Spleen (tissue), 13 donors: ENCODE measurements at regions of chr3 and their contacts with region 1.

Region 1: DNA sequence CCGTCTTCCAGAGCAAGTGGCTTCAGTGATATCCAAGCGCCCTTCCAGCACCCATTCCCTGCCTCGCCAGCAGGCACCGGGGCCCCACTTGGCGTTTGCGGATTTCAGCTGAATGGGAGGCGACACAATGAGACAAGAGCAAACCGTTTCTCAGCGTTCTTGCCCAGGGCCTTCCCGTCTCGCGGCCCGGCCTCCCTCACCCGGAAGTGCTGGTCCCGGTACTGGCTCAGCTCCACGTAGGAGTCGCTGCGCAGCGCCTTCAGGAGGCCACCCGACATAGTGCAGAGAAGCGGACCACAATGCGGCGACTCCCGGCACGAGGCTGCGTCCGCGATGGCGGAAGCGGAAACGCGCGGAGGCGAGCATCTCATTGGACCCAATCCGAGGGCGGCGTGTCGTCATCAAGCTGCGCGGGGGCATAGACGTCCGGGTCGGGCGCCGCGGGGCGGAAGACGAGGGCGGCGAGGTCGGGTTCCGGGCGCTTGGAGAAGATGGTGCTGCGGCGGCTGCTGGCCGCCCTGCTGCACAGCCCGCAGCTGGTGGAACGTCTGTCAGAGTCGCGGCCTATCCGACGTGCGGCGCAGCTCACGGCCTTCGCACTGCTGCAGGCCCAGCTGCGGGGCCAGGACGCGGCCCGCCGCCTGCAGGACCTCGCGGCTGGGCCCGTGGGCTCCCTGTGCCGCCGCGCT is at the start of gene NCBP2:
- DNase-seq: peak; percentile 98
- H3K4me3 ChIP-seq: peak within 1 kb of the TSS; percentile 87 to 100 (median 100)
- H3K27ac ChIP-seq: peak within 1 kb of the TSS; percentile 91 to 96 (median 94)
- H3K4me1 ChIP-seq: peaks cover 23 to 58% (median 45%) of the 10 kb centered on the region in 6 donors
- H3K27me3 ChIP-seq: no peaks in the 10 kb centered on the region
- CTCF ChIP-seq: peak; percentile 45 to 90 (median 80)
- POLR2A ChIP-seq: peak; percentile 27 to 70 (median 33)
- total RNA-seq, gene NCBP2: 44.6 to 50.2 (median 48.7) TPM

Region 2: GRCh38 chr3:196867507-196868296 is 74.7 kb before region 1 on chr3 and contains the start of gene SENP5:
- intact Hi-C with region 1: loop called (anchors 10 kb)
- DNase-seq: peak; percentile 99
- H3K4me3 ChIP-seq: peak within 1 kb of the TSS; percentile 87 to 99 (median 96)
- H3K27ac ChIP-seq: peak within 1 kb of the TSS; percentile 89 to 97 (median 94)
- H3K4me1 ChIP-seq: peaks cover 19 to 56% (median 45%) of the 10 kb centered on the region in 6 donors
- H3K27me3 ChIP-seq: no peaks in the 10 kb centered on the region
- CTCF ChIP-seq: peak in 2 of 11 experiments; percentile 16 to 33
- POLR2A ChIP-seq: peak; percentile 81 to 92 (median 91)
- total RNA-seq, gene SENP5: 41.7 to 59.6 (median 52.5) TPM